Naive thymus-derived CD4-positive, alpha-beta T cell (primary cell): ENCODE measurements at regions of chr4 and their contacts with region 1.

Region 1: GRCh38 chr4:36255577-36255976 is 11.3 kb upstream of the ARAP2 start:
- DNase-seq: peak in 8 of 9 donors; percentile 46 to 90 (median 86)
- ATAC-seq: peak; percentile 98
- H3K4me3 ChIP-seq: no peak overlapping the region
- H3K4me3 Mint-ChIP-seq: peak overlapping the region; percentile 22 to 85 (median 68)
- H3K27ac ChIP-seq: peak overlapping the region; percentile 53
- H3K27ac Mint-ChIP-seq: peak overlapping the region; percentile 74 to 96 (median 86)
- H3K4me1 ChIP-seq: peaks cover 10 to 49% of the 10 kb centered on the region in 2 donors
- H3K4me1 Mint-ChIP-seq: peaks cover 22 to 40% (median 34%) of the 10 kb centered on the region in 7 donors
- H3K27me3 ChIP-seq: no peaks in the 10 kb centered on the region
- H3K27me3 Mint-ChIP-seq: peaks cover 0 to 4% (median 0%) of the 10 kb centered on the region in 5 donors

Region 2: GRCh38 chr4:35520065-35520464 is 735.5 kb before region 1 on chr4:
- CTCF ChIA-PET with region 1: no interaction called
- POLR2A ChIA-PET with region 1: no interaction called
- intact Hi-C with region 1: no loop called
- DNase-seq: no peak
- ATAC-seq: no peak
- H3K4me3 ChIP-seq: no peak overlapping the region
- H3K4me3 Mint-ChIP-seq: no peak overlapping the region
- H3K27ac ChIP-seq: no peak overlapping the region
- H3K27ac Mint-ChIP-seq: no peak overlapping the region
- H3K4me1 ChIP-seq: no peaks in the 10 kb centered on the region
- H3K4me1 Mint-ChIP-seq: no peaks in the 10 kb centered on the region
- H3K27me3 ChIP-seq: no peaks in the 10 kb centered on the region
- H3K27me3 Mint-ChIP-seq: no peaks in the 10 kb centered on the region

Region 3: GRCh38 chr4:36020351-36020750 is 235.2 kb before region 1 on chr4:
- CTCF ChIA-PET with region 1: no interaction called
- POLR2A ChIA-PET with region 1: no interaction called
- intact Hi-C with region 1: no loop called
- DNase-seq: no peak
- ATAC-seq: no peak
- H3K4me3 ChIP-seq: no peak overlapping the region
- H3K4me3 Mint-ChIP-seq: no peak overlapping the region
- H3K27ac ChIP-seq: no peak overlapping the region
- H3K27ac Mint-ChIP-seq: no peak overlapping the region
- H3K4me1 ChIP-seq: no peaks in the 10 kb centered on the region
- H3K4me1 Mint-ChIP-seq: no peaks in the 10 kb centered on the region
- H3K27me3 ChIP-seq: no peaks in the 10 kb centered on the region
- H3K27me3 Mint-ChIP-seq: no peaks in the 10 kb centered on the region

Region 4: DNA sequence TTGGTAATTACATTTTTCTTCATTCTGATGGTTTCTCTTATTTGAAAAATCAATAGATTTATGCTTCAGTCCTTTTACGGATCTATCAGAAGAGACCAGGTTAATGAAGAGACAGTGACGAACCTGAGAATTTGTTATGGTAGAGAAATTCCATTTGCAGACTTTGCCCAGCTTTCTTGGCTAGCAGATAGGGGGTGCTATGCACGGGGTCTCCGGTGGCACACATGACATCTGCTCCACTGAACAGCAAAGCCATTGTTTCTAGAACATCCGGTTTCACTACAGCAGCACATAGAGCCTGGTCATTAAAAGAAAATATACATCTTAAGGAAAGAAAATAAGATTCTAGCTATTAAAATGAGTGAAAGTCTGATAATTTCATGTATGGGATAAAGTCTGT is 96.4 kb before region 1 on chr4:
- CTCF ChIA-PET with region 1: no interaction called
- POLR2A ChIA-PET with region 1: no interaction called
- intact Hi-C with region 1: loop called in 1 of 2 experiments (anchors 5 kb)
- DNase-seq: no peak
- ATAC-seq: no peak
- H3K4me3 ChIP-seq: no peak overlapping the region
- H3K4me3 Mint-ChIP-seq: no peak overlapping the region
- H3K27ac ChIP-seq: no peak overlapping the region
- H3K27ac Mint-ChIP-seq: no peak overlapping the region
- H3K4me1 ChIP-seq: no peaks in the 10 kb centered on the region
- H3K4me1 Mint-ChIP-seq: peaks cover 0 to 14% (median 0%) of the 10 kb centered on the region in 7 donors
- H3K27me3 ChIP-seq: no peaks in the 10 kb centered on the region
- H3K27me3 Mint-ChIP-seq: no peaks in the 10 kb centered on the region

Region 5: GRCh38 chr4:36208893-36209473 is 46.6 kb before region 1 on chr4:
- CTCF ChIA-PET with region 1: no interaction called
- POLR2A ChIA-PET with region 1: no interaction called
- intact Hi-C with region 1: loop called in 1 of 2 experiments (anchors 1 kb)
- DNase-seq: peak in 6 of 9 donors; percentile 22 to 42 (median 32)
- ATAC-seq: peak; percentile 79
- H3K4me3 ChIP-seq: no peak overlapping the region
- H3K4me3 Mint-ChIP-seq: peak overlapping the region in 9 of 10 donors; percentile 34 to 68 (median 57)
- H3K27ac ChIP-seq: no peak overlapping the region
- H3K27ac Mint-ChIP-seq: peak overlapping the region in 7 of 9 donors; percentile 20 to 84 (median 45)
- H3K4me1 ChIP-seq: peaks cover 5 to 45% of the 10 kb centered on the region in 2 donors
- H3K4me1 Mint-ChIP-seq: peaks cover 16 to 53% (median 43%) of the 10 kb centered on the region in 7 donors
- H3K27me3 ChIP-seq: no peaks in the 10 kb centered on the region
- H3K27me3 Mint-ChIP-seq: no peaks in the 10 kb centered on the region

Region 6: GRCh38 chr4:36269101-36269500 is 13.5 kb after region 1 on chr4:
- CTCF ChIA-PET with region 1: no interaction called
- POLR2A ChIA-PET with region 1: interaction called, 3 read pairs
- intact Hi-C with region 1: loop called (anchors 1 kb)
- DNase-seq: peak in 7 of 9 donors; percentile 27 to 66 (median 47)
- ATAC-seq: peak; percentile 96
- H3K4me3 ChIP-seq: no peak overlapping the region
- H3K4me3 Mint-ChIP-seq: no peak overlapping the region
- H3K27ac ChIP-seq: no peak overlapping the region
- H3K27ac Mint-ChIP-seq: peak overlapping the region in 8 of 9 donors; percentile 10 to 85 (median 52)
- H3K4me1 ChIP-seq: peaks cover 7 to 27% of the 10 kb centered on the region in 2 donors
- H3K4me1 Mint-ChIP-seq: peaks cover 2 to 46% (median 32%) of the 10 kb centered on the region in 7 donors
- H3K27me3 ChIP-seq: no peaks in the 10 kb centered on the region
- H3K27me3 Mint-ChIP-seq: peaks cover 0 to 3% (median 0%) of the 10 kb centered on the region in 5 donors

Region 7: DNA sequence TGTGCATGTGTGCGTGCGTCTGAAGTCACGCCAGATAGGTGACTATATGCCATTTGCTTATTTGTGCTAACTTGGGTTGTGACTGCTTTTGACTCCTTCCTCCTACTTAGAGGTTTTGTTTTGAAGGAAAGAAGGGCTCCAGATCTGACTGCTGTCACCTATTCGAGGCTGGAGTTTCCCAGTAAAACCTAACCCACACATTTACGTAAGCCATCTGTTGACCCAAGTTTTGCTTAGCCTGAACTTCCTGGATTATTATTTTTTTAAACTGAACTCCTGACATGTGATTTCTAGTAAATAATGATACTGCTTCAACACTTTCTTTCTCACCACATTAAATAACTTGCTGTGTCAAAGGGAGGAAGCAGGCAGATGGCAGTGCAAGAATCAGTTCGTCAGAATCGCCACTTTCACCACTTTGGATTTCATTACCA is 67.4 kb after region 1 on chr4:
- CTCF ChIA-PET with region 1: interaction called, 3 read pairs
- POLR2A ChIA-PET with region 1: no interaction called
- intact Hi-C with region 1: loop called (anchors 1 kb)
- DNase-seq: peak in 8 of 9 donors; percentile 37 to 81 (median 66)
- ATAC-seq: peak; percentile 86
- H3K4me3 ChIP-seq: peak overlapping the region; percentile 6
- H3K4me3 Mint-ChIP-seq: peak overlapping the region in 9 of 10 donors; percentile 51 to 79 (median 65)
- H3K27ac ChIP-seq: no peak overlapping the region
- H3K27ac Mint-ChIP-seq: peak overlapping the region; percentile 44 to 87 (median 72)
- H3K4me1 ChIP-seq: peaks cover 24 to 37% of the 10 kb centered on the region in 2 donors
- H3K4me1 Mint-ChIP-seq: peaks cover 32 to 76% (median 41%) of the 10 kb centered on the region in 7 donors
- H3K27me3 ChIP-seq: no peaks in the 10 kb centered on the region
- H3K27me3 Mint-ChIP-seq: no peaks in the 10 kb centered on the region

Region 8: GRCh38 chr4:36394352-36394903 is 138.9 kb after region 1 on chr4:
- CTCF ChIA-PET with region 1: interaction called, 4 read pairs
- POLR2A ChIA-PET with region 1: no interaction called
- intact Hi-C with region 1: loop called in 1 of 2 experiments (anchors 1 kb)
- DNase-seq: peak in 8 of 9 donors; percentile 33 to 84 (median 71)
- ATAC-seq: peak; percentile 92
- H3K4me3 ChIP-seq: no peak overlapping the region
- H3K4me3 Mint-ChIP-seq: peak overlapping the region in 6 of 10 donors; percentile 27 to 76 (median 50)
- H3K27ac ChIP-seq: no peak overlapping the region
- H3K27ac Mint-ChIP-seq: peak overlapping the region; percentile 83 to 96 (median 88)
- H3K4me1 ChIP-seq: peaks cover 5 to 11% of the 10 kb centered on the region in 2 donors
- H3K4me1 Mint-ChIP-seq: peaks cover 0 to 24% (median 15%) of the 10 kb centered on the region in 7 donors
- H3K27me3 ChIP-seq: no peaks in the 10 kb centered on the region
- H3K27me3 Mint-ChIP-seq: peaks cover 0 to 14% (median 0%) of the 10 kb centered on the region in 5 donors

Region 9: GRCh38 chr4:36439556-36439955 is 184.0 kb after region 1 on chr4:
- CTCF ChIA-PET with region 1: no interaction called
- POLR2A ChIA-PET with region 1: no interaction called
- intact Hi-C with region 1: no loop called
- DNase-seq: no peak
- ATAC-seq: no peak
- H3K4me3 ChIP-seq: no peak overlapping the region
- H3K4me3 Mint-ChIP-seq: no peak overlapping the region
- H3K27ac ChIP-seq: no peak overlapping the region
- H3K27ac Mint-ChIP-seq: no peak overlapping the region
- H3K4me1 ChIP-seq: no peaks in the 10 kb centered on the region
- H3K4me1 Mint-ChIP-seq: no peaks in the 10 kb centered on the region
- H3K27me3 ChIP-seq: no peaks in the 10 kb centered on the region
- H3K27me3 Mint-ChIP-seq: peaks cover 0 to 14% (median 10%) of the 10 kb centered on the region in 5 donors

Region 10: GRCh38 chr4:37516057-37516775 is 1260.6 kb after region 1 on chr4:
- CTCF ChIA-PET with region 1: no interaction called
- POLR2A ChIA-PET with region 1: no interaction called
- intact Hi-C with region 1: no loop called
- DNase-seq: no peak
- ATAC-seq: no peak
- H3K4me3 ChIP-seq: no peak overlapping the region
- H3K4me3 Mint-ChIP-seq: no peak overlapping the region
- H3K27ac ChIP-seq: no peak overlapping the region
- H3K27ac Mint-ChIP-seq: no peak overlapping the region
- H3K4me1 ChIP-seq: no peaks in the 10 kb centered on the region
- H3K4me1 Mint-ChIP-seq: no peaks in the 10 kb centered on the region
- H3K27me3 ChIP-seq: no peaks in the 10 kb centered on the region
- H3K27me3 Mint-ChIP-seq: peaks cover 0 to 8% (median 0%) of the 10 kb centered on the region in 5 donors